ENCODE measurements at regions of chr5 and their contacts with region 1.

Region 1: DNA sequence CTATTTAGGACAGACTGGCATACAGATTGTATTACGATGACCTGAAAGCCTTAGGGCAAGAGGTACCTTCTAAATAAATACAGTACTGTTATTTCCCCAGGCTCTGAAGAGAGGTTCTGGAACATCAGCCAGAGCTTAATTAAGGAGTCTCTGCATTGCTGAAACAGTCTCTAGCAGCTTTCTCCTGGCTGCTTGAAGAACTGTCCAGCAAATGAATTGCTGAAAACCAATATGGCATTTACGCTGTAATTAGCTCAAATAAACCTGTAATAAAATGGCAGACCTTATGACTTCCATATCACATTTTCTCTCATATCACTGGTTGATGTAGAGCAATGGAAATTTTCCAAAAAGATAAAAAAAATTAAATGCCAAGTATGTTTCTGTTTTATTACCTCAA is 636.3 kb downstream of the GABRG2 start:
- DNase-seq: peak; percentile 32
- H3K4me3 Mint-ChIP-seq: no peak overlapping the region
- H3K27ac Mint-ChIP-seq: no peak overlapping the region
- H3K4me1 Mint-ChIP-seq: peaks cover 5% of the 10 kb centered on the region
- H3K27me3 Mint-ChIP-seq: peaks cover 36% of the 10 kb centered on the region
- CTCF ChIP-seq: no peak

Region 2: GRCh38 chr5:161851691-161852299 is 852.1 kb before region 1 on chr5:
- CTCF ChIA-PET with region 1: interaction called, 5 read pairs
- POLR2A ChIA-PET with region 1: no interaction called
- intact Hi-C with region 1: loop called (anchors 2 kb)
- DNase-seq: peak; percentile 30
- H3K4me3 Mint-ChIP-seq: no peak overlapping the region
- H3K27ac Mint-ChIP-seq: no peak overlapping the region
- H3K4me1 Mint-ChIP-seq: no peaks in the 10 kb centered on the region
- H3K27me3 Mint-ChIP-seq: peaks cover 79% of the 10 kb centered on the region
- CTCF ChIP-seq: peak; percentile 45

Region 3: GRCh38 chr5:162209005-162209605 is 494.8 kb before region 1 on chr5:
- CTCF ChIA-PET with region 1: interaction called, 13 read pairs
- POLR2A ChIA-PET with region 1: no interaction called
- intact Hi-C with region 1: loop called (anchors 2 kb)
- DNase-seq: peak; percentile 83
- H3K4me3 Mint-ChIP-seq: no peak overlapping the region
- H3K27ac Mint-ChIP-seq: no peak overlapping the region
- H3K4me1 Mint-ChIP-seq: peaks cover 12% of the 10 kb centered on the region
- H3K27me3 Mint-ChIP-seq: no peaks in the 10 kb centered on the region
- CTCF ChIP-seq: peak; percentile 71

Region 4: GRCh38 chr5:162683280-162683679 is 20.6 kb before region 1 on chr5:
- CTCF ChIA-PET with region 1: interaction called, 11 read pairs
- POLR2A ChIA-PET with region 1: no interaction called
- intact Hi-C with region 1: no loop called
- DNase-seq: peak; percentile 16
- H3K4me3 Mint-ChIP-seq: no peak overlapping the region
- H3K27ac Mint-ChIP-seq: no peak overlapping the region
- H3K4me1 Mint-ChIP-seq: peaks cover 14% of the 10 kb centered on the region
- H3K27me3 Mint-ChIP-seq: no peaks in the 10 kb centered on the region
- CTCF ChIP-seq: no peak

Measured in MCF 10A (cell line).